Aorta (tissue), 5 donors: ENCODE measurements at regions of chr12 and their contacts with region 1.

Region 1: DNA sequence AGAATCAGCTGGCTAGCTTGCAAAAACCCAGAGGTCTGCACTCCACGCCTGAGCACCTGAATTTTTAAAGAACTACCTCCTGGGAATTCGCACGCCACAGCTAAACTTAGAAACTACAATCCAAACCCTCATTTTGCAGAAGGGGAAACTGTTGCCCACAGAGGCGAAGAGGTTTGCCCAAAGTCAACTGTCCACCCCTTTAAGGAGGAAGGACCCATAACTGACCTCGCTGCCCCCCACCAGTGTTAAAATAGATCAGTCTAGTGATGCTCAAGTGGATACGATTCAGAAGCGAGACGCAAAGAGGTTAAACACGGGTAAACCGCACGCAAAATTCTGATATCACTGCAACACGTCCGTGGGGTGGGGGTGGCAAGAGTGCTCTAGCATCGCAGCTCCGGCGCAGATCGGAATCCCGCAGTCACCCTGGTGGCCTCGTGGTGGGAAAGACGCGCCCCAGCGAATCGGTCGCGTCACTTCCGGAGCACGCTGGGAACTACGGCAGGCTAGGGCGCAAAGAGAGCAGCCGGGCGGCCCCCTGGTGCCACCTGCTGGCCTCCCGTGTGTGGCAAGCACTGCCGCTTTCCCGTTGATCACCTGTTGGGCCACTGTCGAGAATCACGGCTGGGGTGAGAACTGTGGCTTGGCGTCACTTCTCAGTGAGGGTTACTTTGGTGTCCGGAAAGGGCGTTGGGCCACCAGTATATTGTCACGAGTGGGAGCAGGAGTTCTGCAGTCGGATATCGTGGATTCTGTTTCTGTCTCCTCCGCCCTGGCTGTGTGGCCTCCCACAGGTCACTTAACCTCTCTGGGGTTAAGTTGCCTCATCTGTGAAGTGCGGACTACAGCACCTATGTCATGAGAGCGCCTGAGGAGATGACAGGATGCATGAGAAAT is at the start of gene ALKBH2:
- DNase-seq: peak; percentile 96 to 98
- ATAC-seq: peak; percentile 87
- H3K4me3 ChIP-seq: peak within 1 kb of the TSS; percentile 62 to 85
- H3K27ac ChIP-seq: peak within 1 kb of the TSS in 1 of 2 donors; percentile 34
- H3K4me1 ChIP-seq: no peaks in the 10 kb centered on the region
- H3K27me3 ChIP-seq: no peaks in the 10 kb centered on the region
- total RNA-seq, gene ALKBH2: 11.0 to 12.6 TPM

Region 2: GRCh38 chr12:108337235-108338223 is 755.7 kb before region 1 on chr12:
- intact Hi-C with region 1: loop called in 1 of 2 experiments (anchors 10 kb)
- DNase-seq: peak; percentile 55 to 58
- ATAC-seq: no peak
- H3K4me3 ChIP-seq: peak overlapping the region; percentile 32 to 50
- H3K27ac ChIP-seq: peak overlapping the region; percentile 22 to 55
- H3K4me1 ChIP-seq: peaks cover 2 to 4% of the 10 kb centered on the region in 2 donors
- H3K27me3 ChIP-seq: no peaks in the 10 kb centered on the region

Region 3: GRCh38 chr12:108562348-108563135 is 530.7 kb before region 1 on chr12 and contains the start of gene ISCU:
- intact Hi-C with region 1: loop called (anchors 2 to 5 kb)
- DNase-seq: peak; percentile 99 to 100
- ATAC-seq: peak; percentile 95
- H3K4me3 ChIP-seq: peak within 1 kb of the TSS; percentile 60 to 88
- H3K27ac ChIP-seq: peak within 1 kb of the TSS in 1 of 2 donors; percentile 87
- H3K4me1 ChIP-seq: peaks cover 0 to 9% of the 10 kb centered on the region in 2 donors
- H3K27me3 ChIP-seq: no peaks in the 10 kb centered on the region
- total RNA-seq, gene ISCU: 129 to 144 TPM

Region 4: GRCh38 chr12:109052414-109053323 is 40.6 kb before region 1 on chr12 and contains the start of gene USP30:
- intact Hi-C with region 1: loop called (anchors 5 kb)
- DNase-seq: peak; percentile 90 to 95
- ATAC-seq: peak; percentile 97
- H3K4me3 ChIP-seq: peak within 1 kb of the TSS; percentile 91 to 97
- H3K27ac ChIP-seq: peak within 1 kb of the TSS in 1 of 2 donors; percentile 49
- H3K4me1 ChIP-seq: peaks cover 0 to 4% of the 10 kb centered on the region in 2 donors
- H3K27me3 ChIP-seq: no peaks in the 10 kb centered on the region
- total RNA-seq, gene USP30: 7.3 to 14.8 TPM

Region 5: GRCh38 chr12:109477185-109477962 is 384.1 kb after region 1 on chr12 and contains the starts of genes KCTD10 and UBE3B:
- intact Hi-C with region 1: loop called in 1 of 2 experiments (anchors 5 kb)
- DNase-seq: peak; percentile 93 to 96
- ATAC-seq: peak; percentile 99
- H3K4me3 ChIP-seq: peak within 1 kb of the TSS; percentile 84 to 95
- H3K27ac ChIP-seq: peak within 1 kb of the TSS; percentile 2 to 93
- H3K4me1 ChIP-seq: peaks cover 3% of the 10 kb centered on the region in 2 donors
- H3K27me3 ChIP-seq: no peaks in the 10 kb centered on the region
- total RNA-seq, gene KCTD10: 157 to 199 TPM
- total RNA-seq, gene UBE3B: 36.2 to 40.2 TPM